GM12878 (cell line): ENCODE measurements at regions of chr4 and their contacts with region 1.

Region 1: DNA sequence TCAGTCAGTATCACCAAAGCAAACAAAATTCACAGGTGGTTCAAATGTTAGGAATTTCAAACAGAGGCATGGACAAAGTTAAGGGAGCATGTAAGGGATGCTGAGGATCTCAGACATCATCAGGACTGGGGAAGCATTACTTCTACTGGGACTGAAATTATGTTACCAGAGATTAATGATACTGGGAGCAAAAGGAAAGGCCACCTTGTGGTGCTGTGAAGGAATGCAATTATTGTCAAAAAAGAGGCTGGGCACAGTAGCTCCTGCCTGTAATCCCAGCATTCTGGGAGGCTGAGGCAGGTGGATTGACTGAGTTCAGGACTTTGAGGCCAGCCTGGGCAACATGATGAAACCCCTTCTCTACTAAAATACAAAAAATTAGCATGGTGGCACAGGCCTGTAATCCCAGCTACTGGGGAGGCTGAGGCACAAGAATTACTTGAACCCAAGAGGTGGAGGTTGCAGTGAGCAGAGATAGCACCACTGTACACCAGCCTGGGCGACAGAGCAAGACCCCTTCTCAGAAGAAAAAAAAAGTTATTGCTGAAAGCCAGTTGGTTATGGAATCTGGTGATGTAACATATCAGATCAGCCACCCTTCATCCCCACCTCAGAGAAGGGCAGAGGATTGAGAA is 954.3 kb downstream of the PCDH7 start:
- DNase-seq: no peak
- ATAC-seq: peak; percentile 81
- H3K4me3 ChIP-seq: no peak overlapping the region
- H3K27ac ChIP-seq: no peak overlapping the region
- H3K4me1 ChIP-seq: no peaks in the 10 kb centered on the region
- H3K27me3 ChIP-seq: no peaks in the 10 kb centered on the region
- CTCF ChIP-seq: peak; percentile 32 to 43 (median 33); a peak in 3 of 6 replicates
- EP300 ChIP-seq: no peak
- POLR2A ChIP-seq: no peak
- RAD21 ChIP-seq: 0 out of 2 replicates have a peak, but pooled peaks have one; percentile 17

Region 2: DNA sequence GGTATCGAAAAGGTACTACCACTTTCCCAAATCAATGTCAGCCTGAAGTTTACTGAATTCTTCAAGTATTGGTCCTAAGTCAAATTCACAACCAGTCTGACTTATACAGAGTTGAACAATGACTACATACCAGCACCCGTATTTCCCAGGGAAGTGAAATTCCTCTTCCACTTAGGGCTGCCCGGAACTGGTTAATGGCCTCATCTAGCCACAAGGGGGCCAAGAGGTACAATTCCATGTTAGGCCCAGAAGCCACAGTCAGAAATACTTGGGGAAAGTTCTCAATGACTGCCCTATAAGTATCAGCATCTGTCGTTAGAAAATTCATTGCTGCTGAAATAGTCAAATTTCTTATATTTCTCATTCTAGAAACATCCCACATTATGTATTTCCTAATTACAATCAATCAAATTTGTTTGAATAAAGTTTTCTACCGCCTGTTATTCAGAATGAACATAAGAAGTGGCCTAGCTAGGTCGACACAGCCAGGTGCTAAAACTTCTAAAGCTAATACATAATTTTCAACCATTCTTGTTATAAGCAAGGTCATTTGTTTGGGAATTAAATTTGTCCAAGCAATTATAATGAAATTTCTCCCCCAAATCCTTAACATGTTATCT is 959.9 kb before region 1 on chr4:
- CTCF ChIA-PET with region 1: no interaction called
- POLR2A ChIA-PET with region 1: no interaction called
- RAD21 ChIA-PET with region 1: no interaction called
- SMC1A ChIA-PET with region 1: interaction called, 6 read pairs
- in situ Hi-C with region 1: loop called (anchors 25 kb)
- intact Hi-C with region 1: loop called (anchors 5 kb)
- DNase-seq: no peak
- ATAC-seq: peak; percentile 49
- H3K4me3 ChIP-seq: no peak overlapping the region
- H3K27ac ChIP-seq: no peak overlapping the region
- H3K4me1 ChIP-seq: no peaks in the 10 kb centered on the region
- H3K27me3 ChIP-seq: peaks cover 8 to 15% of the 10 kb centered on the region in 2 experiments
- CTCF ChIP-seq: peak; percentile 46 to 68 (median 47); a peak in 5 of 6 replicates
- EP300 ChIP-seq: no peak
- POLR2A ChIP-seq: no peak
- RAD21 ChIP-seq: peak; percentile 34

Region 3: GRCh38 chr4:31045724-31046318 is 628.6 kb before region 1 on chr4:
- CTCF ChIA-PET with region 1: interaction called, 8 read pairs
- POLR2A ChIA-PET with region 1: no interaction called
- RAD21 ChIA-PET with region 1: no interaction called
- SMC1A ChIA-PET with region 1: interaction called, 3 read pairs
- in situ Hi-C with region 1: no loop called
- intact Hi-C with region 1: loop called (anchors 5 kb)
- DNase-seq: no peak
- ATAC-seq: peak; percentile 66; the same call in 2 of the 3 replicates
- H3K4me3 ChIP-seq: no peak overlapping the region
- H3K27ac ChIP-seq: no peak overlapping the region
- H3K4me1 ChIP-seq: no peaks in the 10 kb centered on the region
- H3K27me3 ChIP-seq: no peaks in the 10 kb centered on the region
- CTCF ChIP-seq: peak; percentile 19 to 38 (median 30); a peak in 2 of 6 replicates
- EP300 ChIP-seq: no peak
- POLR2A ChIP-seq: no peak
- RAD21 ChIP-seq: peak; percentile 6; the same call in 1 of the 2 replicates

Region 4: DNA sequence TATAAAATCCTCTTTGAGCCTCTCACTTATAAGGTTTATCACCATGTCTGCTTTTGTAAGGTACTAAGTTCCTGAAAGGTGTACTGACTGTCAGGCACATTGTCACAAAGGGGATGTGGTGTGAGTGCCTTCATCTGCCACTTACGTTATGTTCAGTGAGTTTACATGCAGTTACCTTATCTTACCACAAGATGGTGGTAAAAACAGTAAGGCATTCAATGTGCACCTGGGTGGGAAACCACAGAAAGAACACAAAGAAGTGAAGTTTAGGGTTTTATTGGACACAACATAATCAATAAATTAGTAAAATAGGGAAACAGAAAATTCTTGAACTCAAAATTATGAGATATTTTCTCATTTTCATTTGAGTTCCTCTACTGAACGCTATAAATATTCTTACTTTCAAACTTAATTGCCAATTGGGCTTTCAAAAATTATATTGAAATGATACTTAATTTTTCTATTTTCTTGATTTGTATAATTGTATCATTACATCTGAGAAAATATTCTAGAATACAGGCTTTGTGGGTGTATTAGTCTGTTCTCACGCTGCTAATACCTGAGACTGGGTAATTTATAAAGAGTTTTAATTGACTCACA is 303.5 kb before region 1 on chr4:
- CTCF ChIA-PET with region 1: interaction called, 5 read pairs
- POLR2A ChIA-PET with region 1: no interaction called
- RAD21 ChIA-PET with region 1: interaction called, 4 read pairs
- SMC1A ChIA-PET with region 1: no interaction called
- in situ Hi-C with region 1: no loop called
- intact Hi-C with region 1: loop called (anchors 2 kb)
- DNase-seq: peak; percentile 4
- ATAC-seq: peak; percentile 97
- H3K4me3 ChIP-seq: no peak overlapping the region
- H3K27ac ChIP-seq: no peak overlapping the region
- H3K4me1 ChIP-seq: no peaks in the 10 kb centered on the region
- H3K27me3 ChIP-seq: no peaks in the 10 kb centered on the region
- CTCF ChIP-seq: peak; percentile 67 to 71 (median 70)
- EP300 ChIP-seq: no peak
- POLR2A ChIP-seq: no peak
- RAD21 ChIP-seq: peak; percentile 71